Naive thymus-derived CD4-positive, alpha-beta T cell (primary cell): ENCODE measurements at regions of chr1 and their contacts with region 1.

Region 1: DNA sequence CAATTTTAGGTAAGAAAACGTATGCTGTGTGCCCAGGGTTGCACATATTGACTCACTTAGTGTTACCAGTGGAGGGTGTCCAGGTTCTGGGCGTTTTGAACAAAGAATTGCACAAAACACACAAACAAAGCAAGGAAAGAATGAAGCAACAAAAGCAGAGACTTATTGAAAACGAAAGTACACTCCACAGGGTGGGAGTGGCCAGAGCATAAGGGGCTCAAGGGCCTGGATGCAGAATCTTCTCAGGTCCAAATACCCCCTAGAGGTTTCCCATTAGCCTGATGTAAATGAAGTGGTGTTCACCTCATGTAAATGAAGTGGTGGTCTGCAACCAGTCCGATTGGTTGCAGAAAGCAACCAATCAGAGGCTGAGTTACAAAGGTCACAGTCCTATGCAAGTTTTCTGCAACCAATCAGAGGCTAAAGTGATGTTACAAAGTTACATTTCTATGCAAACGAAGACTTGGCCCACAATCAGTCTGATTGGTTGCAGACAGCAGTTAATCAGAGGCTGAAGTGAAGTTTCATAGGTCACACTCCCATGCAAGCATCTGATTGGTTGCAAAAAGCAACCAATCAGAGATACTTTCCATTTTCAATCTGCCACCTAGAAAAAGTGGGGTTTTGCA is 228.3 kb downstream of the ST6GALNAC3 start:
- DNase-seq: no peak
- ATAC-seq: no peak
- H3K4me3 ChIP-seq: no peak overlapping the region
- H3K4me3 Mint-ChIP-seq: peak overlapping the region in 4 of 10 donors; percentile 10 to 50 (median 30)
- H3K27ac ChIP-seq: no peak overlapping the region
- H3K27ac Mint-ChIP-seq: peak overlapping the region in 5 of 9 donors; percentile 41 to 80 (median 73)
- H3K4me1 ChIP-seq: peaks cover 0 to 20% of the 10 kb centered on the region in 2 donors
- H3K4me1 Mint-ChIP-seq: peaks cover 10 to 52% (median 41%) of the 10 kb centered on the region in 7 donors
- H3K27me3 ChIP-seq: no peaks in the 10 kb centered on the region
- H3K27me3 Mint-ChIP-seq: peaks cover 0 to 2% (median 0%) of the 10 kb centered on the region in 5 donors

Region 2: DNA sequence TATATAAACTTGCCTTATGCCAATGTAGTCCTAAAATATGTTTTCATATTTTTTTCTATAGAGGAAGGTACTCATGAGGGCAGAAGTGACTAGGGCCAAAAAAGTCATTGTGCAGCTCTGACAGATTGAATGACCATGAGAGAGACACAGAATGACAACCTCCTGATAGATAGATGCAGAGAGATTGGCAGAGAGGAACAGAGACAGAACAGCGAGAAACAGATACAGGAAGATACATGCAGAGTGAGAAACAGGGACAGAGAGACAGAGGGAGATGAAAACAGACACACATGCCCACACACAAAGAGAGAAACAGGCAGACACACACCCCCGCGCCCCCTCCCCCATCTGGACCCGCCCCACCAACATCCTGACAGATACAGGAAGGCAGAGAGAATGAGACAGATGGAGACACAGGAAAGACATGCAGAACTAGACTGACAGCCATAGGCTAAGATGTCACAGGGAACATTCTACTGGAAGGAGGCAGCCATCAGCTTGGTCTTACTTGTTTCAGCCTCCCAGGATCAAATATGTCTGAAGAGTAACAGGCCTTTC is 17.2 kb before region 1 on chr1:
- CTCF ChIA-PET with region 1: interaction called, 3 read pairs
- POLR2A ChIA-PET with region 1: interaction called, 7 read pairs
- intact Hi-C with region 1: loop called in 1 of 2 experiments (anchors 1 kb)
- DNase-seq: peak in 5 of 9 donors; percentile 30 to 51 (median 37)
- ATAC-seq: peak; percentile 54
- H3K4me3 ChIP-seq: no peak overlapping the region
- H3K4me3 Mint-ChIP-seq: peak overlapping the region in 9 of 10 donors; percentile 15 to 75 (median 59)
- H3K27ac ChIP-seq: peak overlapping the region; percentile 6
- H3K27ac Mint-ChIP-seq: peak overlapping the region; percentile 33 to 95 (median 70)
- H3K4me1 ChIP-seq: peaks cover 8 to 54% of the 10 kb centered on the region in 2 donors
- H3K4me1 Mint-ChIP-seq: peaks cover 16 to 92% (median 64%) of the 10 kb centered on the region in 7 donors
- H3K27me3 ChIP-seq: no peaks in the 10 kb centered on the region
- H3K27me3 Mint-ChIP-seq: no peaks in the 10 kb centered on the region

Region 3: GRCh38 chr1:76314730-76315129 is 11.9 kb after region 1 on chr1:
- CTCF ChIA-PET with region 1: interaction called, 3 read pairs
- POLR2A ChIA-PET with region 1: no interaction called
- intact Hi-C with region 1: loop called in 1 of 2 experiments (anchors 2 kb)
- DNase-seq: no peak
- ATAC-seq: no peak
- H3K4me3 ChIP-seq: no peak overlapping the region
- H3K4me3 Mint-ChIP-seq: no peak overlapping the region
- H3K27ac ChIP-seq: no peak overlapping the region
- H3K27ac Mint-ChIP-seq: no peak overlapping the region
- H3K4me1 ChIP-seq: no peaks in the 10 kb centered on the region
- H3K4me1 Mint-ChIP-seq: peaks cover 0 to 7% (median 0%) of the 10 kb centered on the region in 7 donors
- H3K27me3 ChIP-seq: no peaks in the 10 kb centered on the region
- H3K27me3 Mint-ChIP-seq: peaks cover 0 to 3% (median 0%) of the 10 kb centered on the region in 5 donors

Region 4: GRCh38 chr1:76330991-76331603 is 28.3 kb after region 1 on chr1:
- CTCF ChIA-PET with region 1: no interaction called
- POLR2A ChIA-PET with region 1: no interaction called
- intact Hi-C with region 1: loop called in 1 of 2 experiments (anchors 2 kb)
- DNase-seq: peak in 7 of 9 donors; percentile 19 to 56 (median 51)
- ATAC-seq: peak; percentile 63
- H3K4me3 ChIP-seq: no peak overlapping the region
- H3K4me3 Mint-ChIP-seq: no peak overlapping the region
- H3K27ac ChIP-seq: no peak overlapping the region
- H3K27ac Mint-ChIP-seq: peak overlapping the region in 1 of 9 donors; percentile 16
- H3K4me1 ChIP-seq: no peaks in the 10 kb centered on the region
- H3K4me1 Mint-ChIP-seq: peaks cover 0 to 41% (median 14%) of the 10 kb centered on the region in 7 donors
- H3K27me3 ChIP-seq: no peaks in the 10 kb centered on the region
- H3K27me3 Mint-ChIP-seq: no peaks in the 10 kb centered on the region

Region 5: GRCh38 chr1:76418531-76418930 is 115.7 kb after region 1 on chr1:
- CTCF ChIA-PET with region 1: no interaction called
- POLR2A ChIA-PET with region 1: no interaction called
- intact Hi-C with region 1: no loop called
- DNase-seq: no peak
- ATAC-seq: no peak
- H3K4me3 ChIP-seq: no peak overlapping the region
- H3K4me3 Mint-ChIP-seq: no peak overlapping the region
- H3K27ac ChIP-seq: no peak overlapping the region
- H3K27ac Mint-ChIP-seq: no peak overlapping the region
- H3K4me1 ChIP-seq: no peaks in the 10 kb centered on the region
- H3K4me1 Mint-ChIP-seq: no peaks in the 10 kb centered on the region
- H3K27me3 ChIP-seq: no peaks in the 10 kb centered on the region
- H3K27me3 Mint-ChIP-seq: no peaks in the 10 kb centered on the region